Activated CD4-positive, alpha-beta memory T cell treated with anti-CD3 and anti-CD28 coated beads for 36 hours (primary cell): ENCODE measurements at regions of chr7 and their contacts with region 1.

Region 1: GRCh38 chr7:1175967-1176851 is 16.2 kb upstream of the ZFAND2A start:
- DNase-seq: peak; percentile 91
- H3K4me3 Mint-ChIP-seq: peak overlapping the region; percentile 52
- H3K27ac Mint-ChIP-seq: peak overlapping the region; percentile 42
- H3K4me1 Mint-ChIP-seq: peaks cover 11% of the 10 kb centered on the region
- H3K27me3 Mint-ChIP-seq: peaks cover 14% of the 10 kb centered on the region

Region 2: DNA sequence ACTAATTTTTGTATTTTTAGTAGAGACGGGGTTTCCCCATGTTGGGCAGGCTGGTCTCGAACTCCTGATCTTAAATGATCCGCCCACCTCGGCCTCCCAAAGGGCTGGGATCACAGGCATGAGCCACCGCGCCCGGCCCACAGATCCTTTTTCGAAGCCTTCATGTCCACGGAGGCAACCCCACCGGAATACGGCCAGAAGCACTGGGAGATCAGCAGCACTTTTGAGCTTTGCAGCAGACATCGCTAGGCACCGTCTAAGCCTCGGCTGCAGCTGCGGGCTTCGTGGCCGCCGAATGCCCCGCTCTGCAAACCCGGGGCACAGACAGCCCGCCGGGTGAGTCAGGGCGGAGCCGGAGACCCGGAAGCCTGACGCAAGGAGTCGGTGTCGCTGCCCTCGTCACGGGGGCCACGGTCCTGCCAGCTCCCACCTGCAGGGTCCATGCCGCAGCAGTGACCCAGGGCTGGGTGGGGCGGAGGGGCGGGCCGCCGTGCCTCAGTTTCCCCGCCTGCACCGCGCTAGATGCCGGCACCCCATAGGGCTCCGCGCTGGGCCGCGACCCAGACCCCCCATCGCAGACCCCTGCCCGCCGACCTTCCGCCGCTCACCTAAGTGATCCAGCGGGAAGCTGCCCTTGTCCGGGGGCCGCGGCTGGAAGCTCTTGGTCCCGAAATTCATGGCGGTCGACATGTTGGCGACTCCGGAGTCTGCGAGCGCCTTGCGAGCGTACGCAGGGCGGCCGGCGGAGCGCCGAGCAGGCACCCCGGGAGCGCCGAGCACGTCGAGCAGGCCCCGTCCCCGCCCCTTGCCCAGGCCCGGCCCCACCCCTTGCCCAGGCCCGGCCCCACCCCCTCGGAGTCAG is 201.2 kb before region 1 on chr7 and contains the start of gene COX19:
- CTCF ChIA-PET with region 1: interaction called, 14 read pairs
- POLR2A ChIA-PET with region 1: no interaction called
- intact Hi-C with region 1: no loop called
- DNase-seq: peak; percentile 94
- H3K4me3 Mint-ChIP-seq: peak within 1 kb of the TSS; percentile 95
- H3K27ac Mint-ChIP-seq: peak within 1 kb of the TSS; percentile 90
- H3K4me1 Mint-ChIP-seq: peaks cover 27% of the 10 kb centered on the region
- H3K27me3 Mint-ChIP-seq: no peaks in the 10 kb centered on the region
- total RNA-seq, gene COX19: 14.1 to 15.6 TPM

Region 3: GRCh38 chr7:1054861-1055450 is 121.3 kb before region 1 on chr7:
- CTCF ChIA-PET with region 1: no interaction called
- POLR2A ChIA-PET with region 1: no interaction called
- intact Hi-C with region 1: no loop called
- DNase-seq: peak; percentile 61
- H3K4me3 Mint-ChIP-seq: no peak overlapping the region
- H3K27ac Mint-ChIP-seq: peak overlapping the region; percentile 45
- H3K4me1 Mint-ChIP-seq: peaks cover 31% of the 10 kb centered on the region
- H3K27me3 Mint-ChIP-seq: no peaks in the 10 kb centered on the region

Region 4: GRCh38 chr7:1086588-1087464 is 89.4 kb before region 1 on chr7:
- CTCF ChIA-PET with region 1: interaction called, 19 read pairs
- POLR2A ChIA-PET with region 1: no interaction called
- intact Hi-C with region 1: loop called (anchors 1 kb)
- DNase-seq: peak; percentile 81
- H3K4me3 Mint-ChIP-seq: peak overlapping the region; percentile 54
- H3K27ac Mint-ChIP-seq: no peak overlapping the region
- H3K4me1 Mint-ChIP-seq: peaks cover 14% of the 10 kb centered on the region
- H3K27me3 Mint-ChIP-seq: no peaks in the 10 kb centered on the region

Region 5: GRCh38 chr7:1159891-1160668 is 16.1 kb before region 1 on chr7 and contains the start of gene ZFAND2A:
- CTCF ChIA-PET with region 1: interaction called, 14 read pairs
- POLR2A ChIA-PET with region 1: interaction called, 6 read pairs
- intact Hi-C with region 1: no loop called
- DNase-seq: peak; percentile 99
- H3K4me3 Mint-ChIP-seq: peak within 1 kb of the TSS; percentile 90
- H3K27ac Mint-ChIP-seq: peak within 1 kb of the TSS; percentile 87
- H3K4me1 Mint-ChIP-seq: peaks cover 25% of the 10 kb centered on the region
- H3K27me3 Mint-ChIP-seq: no peaks in the 10 kb centered on the region
- total RNA-seq, gene ZFAND2A: 24.1 to 27.5 TPM

Region 6: GRCh38 chr7:1187127-1187526 is 10.9 kb after region 1 on chr7:
- CTCF ChIA-PET with region 1: interaction called, 19 read pairs
- POLR2A ChIA-PET with region 1: interaction called, 3 read pairs
- intact Hi-C with region 1: no loop called
- DNase-seq: no peak
- H3K4me3 Mint-ChIP-seq: no peak overlapping the region
- H3K27ac Mint-ChIP-seq: no peak overlapping the region
- H3K4me1 Mint-ChIP-seq: peaks cover 4% of the 10 kb centered on the region
- H3K27me3 Mint-ChIP-seq: peaks cover 16% of the 10 kb centered on the region

Region 7: GRCh38 chr7:1193593-1194424 is 17.6 kb after region 1 on chr7:
- CTCF ChIA-PET with region 1: interaction called, 17 read pairs
- POLR2A ChIA-PET with region 1: interaction called, 3 read pairs
- intact Hi-C with region 1: no loop called
- DNase-seq: peak; percentile 59
- H3K4me3 Mint-ChIP-seq: no peak overlapping the region
- H3K27ac Mint-ChIP-seq: no peak overlapping the region
- H3K4me1 Mint-ChIP-seq: peaks cover 7% of the 10 kb centered on the region
- H3K27me3 Mint-ChIP-seq: peaks cover 12% of the 10 kb centered on the region